ENCODE measurements at regions of chr5 and their contacts with region 1.

Region 1: DNA sequence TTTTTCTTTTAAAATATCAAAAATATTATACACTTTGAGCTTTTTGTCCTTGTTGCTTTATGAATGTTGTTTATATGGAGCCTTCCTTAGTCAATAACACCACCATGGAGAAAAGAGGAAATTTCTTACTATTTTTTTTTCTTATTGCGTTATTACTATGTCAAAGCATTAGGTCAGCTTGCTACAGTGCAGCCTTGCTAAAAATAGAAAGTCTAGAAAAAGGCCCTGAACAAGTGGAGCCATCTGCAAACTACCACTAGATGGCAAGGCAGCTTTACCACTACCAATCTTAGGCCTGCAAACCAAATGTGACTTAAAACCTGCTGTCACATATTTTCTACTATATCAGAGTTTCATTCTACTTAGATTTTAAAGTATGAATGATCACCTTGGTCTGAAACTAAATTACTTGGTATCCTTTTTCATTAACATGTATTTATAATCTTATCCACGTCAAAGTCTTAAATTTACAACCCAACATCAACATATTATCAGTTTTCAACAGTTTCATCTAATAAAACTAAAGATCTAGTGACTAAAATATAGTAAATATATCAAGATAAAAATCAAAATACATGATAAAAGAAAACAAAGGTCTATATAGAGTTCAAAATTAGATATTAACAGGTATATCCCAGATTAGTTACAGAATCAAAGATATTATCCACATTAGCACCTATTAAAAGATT is 113.1 kb upstream of the ACOT12 start:
- DNase-seq: peak; percentile 62
- H3K4me3 Mint-ChIP-seq: no peak overlapping the region
- H3K27ac Mint-ChIP-seq: no peak overlapping the region
- H3K4me1 Mint-ChIP-seq: no peaks in the 10 kb centered on the region
- H3K27me3 Mint-ChIP-seq: no peaks in the 10 kb centered on the region

Region 2: DNA sequence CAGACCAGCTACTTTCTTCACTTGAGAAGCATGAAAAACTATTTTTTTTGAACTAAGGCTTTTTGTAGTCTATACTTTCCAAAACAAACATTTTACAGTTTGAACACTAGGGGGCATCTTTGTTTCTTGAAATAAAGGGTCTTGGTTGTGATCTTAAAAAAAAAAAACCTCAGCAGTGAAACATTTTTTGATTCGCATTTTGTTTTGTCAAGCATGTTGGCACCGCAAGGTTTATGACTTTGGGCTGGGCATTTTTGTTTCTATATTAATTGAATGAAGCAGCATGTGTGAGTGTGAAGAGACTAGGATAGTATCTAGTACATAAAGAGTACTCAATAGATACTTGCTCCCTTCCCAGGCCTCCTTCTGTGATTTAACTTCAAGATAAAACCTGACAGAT is 81.5 kb before region 1 on chr5:
- CTCF ChIA-PET with region 1: interaction called, 5 read pairs
- intact Hi-C with region 1: loop called (anchors 1 kb)
- DNase-seq: peak; percentile 7
- H3K4me3 Mint-ChIP-seq: no peak overlapping the region
- H3K27ac Mint-ChIP-seq: peak overlapping the region; percentile 8
- H3K4me1 Mint-ChIP-seq: peaks cover 16% of the 10 kb centered on the region
- H3K27me3 Mint-ChIP-seq: no peaks in the 10 kb centered on the region

Region 3: DNA sequence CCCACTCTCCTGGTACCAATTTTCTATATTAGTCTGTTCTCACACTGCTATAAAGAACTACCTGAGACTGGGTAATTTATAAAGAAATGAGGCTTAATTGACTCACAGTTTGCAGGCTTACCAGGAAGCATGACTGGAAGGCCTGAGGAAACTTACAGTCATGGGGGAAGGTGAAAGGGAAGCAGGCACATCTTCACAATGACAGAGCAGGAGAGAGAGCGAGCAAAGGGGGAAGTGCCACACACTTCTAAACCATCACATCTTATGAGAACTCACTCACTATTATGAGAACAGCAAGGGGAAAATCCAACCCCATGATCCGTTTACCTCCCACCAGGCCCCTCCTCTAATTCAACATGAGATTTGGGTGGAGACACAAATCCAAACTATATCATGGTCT is 537.0 kb after region 1 on chr5:
- CTCF ChIA-PET with region 1: no interaction called
- intact Hi-C with region 1: no loop called
- DNase-seq: no peak
- H3K4me3 Mint-ChIP-seq: no peak overlapping the region
- H3K27ac Mint-ChIP-seq: no peak overlapping the region
- H3K4me1 Mint-ChIP-seq: no peaks in the 10 kb centered on the region
- H3K27me3 Mint-ChIP-seq: no peaks in the 10 kb centered on the region

Region 4: DNA sequence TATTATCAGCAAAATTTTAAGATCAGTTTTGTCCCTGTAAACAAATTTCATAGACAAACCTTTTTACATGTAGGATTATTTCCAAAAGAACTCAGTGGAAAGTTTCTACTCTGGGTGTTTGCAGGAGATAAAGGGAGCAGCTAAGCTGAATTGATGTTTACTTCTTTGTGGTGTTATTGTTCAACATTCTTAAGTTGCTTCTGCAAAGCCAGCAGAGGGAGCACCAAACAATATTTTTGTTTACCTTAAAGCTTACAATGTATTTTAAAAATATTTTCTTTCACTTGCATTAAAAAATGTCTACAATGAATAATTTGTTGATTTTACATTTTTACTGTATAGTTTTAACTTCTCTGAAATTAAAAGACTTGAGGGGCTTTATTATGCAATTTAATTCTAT is 600.2 kb after region 1 on chr5:
- CTCF ChIA-PET with region 1: no interaction called
- intact Hi-C with region 1: loop called (anchors 2 kb)
- DNase-seq: no peak
- H3K4me3 Mint-ChIP-seq: no peak overlapping the region
- H3K27ac Mint-ChIP-seq: no peak overlapping the region
- H3K4me1 Mint-ChIP-seq: peaks cover 15% of the 10 kb centered on the region
- H3K27me3 Mint-ChIP-seq: no peaks in the 10 kb centered on the region

Region 5: GRCh38 chr5:82259172-82259800 is 752.2 kb after region 1 on chr5:
- CTCF ChIA-PET with region 1: no interaction called
- intact Hi-C with region 1: loop called (anchors 1 kb)
- DNase-seq: no peak
- H3K4me3 Mint-ChIP-seq: no peak overlapping the region
- H3K27ac Mint-ChIP-seq: no peak overlapping the region
- H3K4me1 Mint-ChIP-seq: peaks cover 1% of the 10 kb centered on the region
- H3K27me3 Mint-ChIP-seq: no peaks in the 10 kb centered on the region